ENCODE measurements at regions of chr6 and their contacts with region 1.

Region 1: GRCh38 chr6:17599885-17600526 is at the start of gene FAM8A1:
- H3K4me3 ChIP-seq: peak within 1 kb of the TSS; percentile 81
- H3K27ac ChIP-seq: peak within 1 kb of the TSS; percentile 66
- H3K4me1 ChIP-seq: peaks cover 6% of the 10 kb centered on the region
- CTCF ChIP-seq: peak; percentile 81

Region 2: DNA sequence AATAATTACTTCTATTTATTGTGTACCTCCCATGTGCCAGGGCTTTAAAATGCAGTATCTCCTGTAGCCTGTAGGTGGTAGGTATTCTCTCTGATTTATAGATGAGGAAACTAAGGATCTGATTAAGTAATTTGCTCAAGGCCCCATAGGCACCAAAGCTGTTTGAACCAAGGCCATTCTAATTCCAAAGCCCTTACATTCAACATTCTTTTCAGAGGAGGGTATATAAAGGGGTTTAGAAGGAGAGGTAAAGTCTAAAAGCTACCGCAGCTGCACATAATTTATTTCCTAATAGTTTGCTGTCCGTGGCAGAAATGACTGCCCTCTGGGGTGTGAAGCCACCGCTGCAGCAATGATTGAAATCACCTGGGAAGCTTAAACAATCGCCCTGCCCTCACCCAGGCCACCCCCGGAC is 94.9 kb before region 1 on chr6:
- CTCF ChIA-PET with region 1: no interaction called
- POLR2A ChIA-PET with region 1: interaction called, 10 read pairs
- H3K4me3 ChIP-seq: no peak overlapping the region
- H3K27ac ChIP-seq: no peak overlapping the region
- H3K4me1 ChIP-seq: no peaks in the 10 kb centered on the region
- CTCF ChIP-seq: no peak

Region 3: GRCh38 chr6:17584241-17584803 is 15.7 kb before region 1 on chr6:
- CTCF ChIA-PET with region 1: interaction called, 13 read pairs
- POLR2A ChIA-PET with region 1: interaction called, 8 read pairs
- H3K4me3 ChIP-seq: no peak overlapping the region
- H3K27ac ChIP-seq: no peak overlapping the region
- H3K4me1 ChIP-seq: peaks cover 2% of the 10 kb centered on the region; the same call in 1 of the 2 replicates
- CTCF ChIP-seq: peak; percentile 83

Region 4: DNA sequence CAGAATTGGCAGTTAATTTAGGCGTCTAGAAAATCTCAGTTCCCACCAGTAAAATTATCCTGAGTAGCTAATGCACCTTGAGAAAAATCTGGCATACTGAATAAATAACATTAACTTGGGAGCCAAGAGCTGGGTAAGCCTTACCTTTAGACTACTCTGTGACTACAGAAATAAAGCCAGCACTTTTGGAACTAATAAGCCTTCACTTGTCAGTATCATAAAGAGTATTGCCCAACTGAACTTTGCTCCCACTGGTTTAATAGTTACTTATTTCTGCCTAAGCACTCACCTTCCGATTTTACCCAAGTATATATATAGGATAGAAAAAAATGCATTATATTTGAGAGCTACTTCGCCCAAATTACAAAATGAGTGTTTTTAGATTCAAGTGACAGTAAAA is 10.8 kb after region 1 on chr6:
- CTCF ChIA-PET with region 1: interaction called, 3 read pairs
- POLR2A ChIA-PET with region 1: interaction called, 10 read pairs
- H3K4me3 ChIP-seq: no peak overlapping the region
- H3K27ac ChIP-seq: no peak overlapping the region
- H3K4me1 ChIP-seq: no peaks in the 10 kb centered on the region
- CTCF ChIP-seq: no peak

Region 5: GRCh38 chr6:17706580-17707370 is 106.8 kb after region 1 on chr6 and contains the start of gene NUP153:
- CTCF ChIA-PET with region 1: interaction called, 3 read pairs
- POLR2A ChIA-PET with region 1: interaction called, 20 read pairs
- H3K4me3 ChIP-seq: peak within 1 kb of the TSS; percentile 96
- H3K27ac ChIP-seq: peak within 1 kb of the TSS; percentile 95
- H3K4me1 ChIP-seq: peaks cover 6% of the 10 kb centered on the region
- CTCF ChIP-seq: no peak

Measured in HEK293 (cell line).